ENCODE measurements at regions of chr16 and their contacts with region 1.

Region 1: GRCh38 chr16:28317040-28317880 is 24.9 kb downstream of the SBK1 start:
- DNase-seq: peak; percentile 33
- H3K4me3 ChIP-seq: no peak overlapping the region
- H3K27ac ChIP-seq: no peak overlapping the region
- H3K4me1 ChIP-seq: no peaks in the 10 kb centered on the region
- H3K27me3 ChIP-seq: no peaks in the 10 kb centered on the region
- CTCF ChIP-seq: peak; percentile 71 to 87 (median 80)
- POLR2A ChIP-seq: no peak

Region 2: DNA sequence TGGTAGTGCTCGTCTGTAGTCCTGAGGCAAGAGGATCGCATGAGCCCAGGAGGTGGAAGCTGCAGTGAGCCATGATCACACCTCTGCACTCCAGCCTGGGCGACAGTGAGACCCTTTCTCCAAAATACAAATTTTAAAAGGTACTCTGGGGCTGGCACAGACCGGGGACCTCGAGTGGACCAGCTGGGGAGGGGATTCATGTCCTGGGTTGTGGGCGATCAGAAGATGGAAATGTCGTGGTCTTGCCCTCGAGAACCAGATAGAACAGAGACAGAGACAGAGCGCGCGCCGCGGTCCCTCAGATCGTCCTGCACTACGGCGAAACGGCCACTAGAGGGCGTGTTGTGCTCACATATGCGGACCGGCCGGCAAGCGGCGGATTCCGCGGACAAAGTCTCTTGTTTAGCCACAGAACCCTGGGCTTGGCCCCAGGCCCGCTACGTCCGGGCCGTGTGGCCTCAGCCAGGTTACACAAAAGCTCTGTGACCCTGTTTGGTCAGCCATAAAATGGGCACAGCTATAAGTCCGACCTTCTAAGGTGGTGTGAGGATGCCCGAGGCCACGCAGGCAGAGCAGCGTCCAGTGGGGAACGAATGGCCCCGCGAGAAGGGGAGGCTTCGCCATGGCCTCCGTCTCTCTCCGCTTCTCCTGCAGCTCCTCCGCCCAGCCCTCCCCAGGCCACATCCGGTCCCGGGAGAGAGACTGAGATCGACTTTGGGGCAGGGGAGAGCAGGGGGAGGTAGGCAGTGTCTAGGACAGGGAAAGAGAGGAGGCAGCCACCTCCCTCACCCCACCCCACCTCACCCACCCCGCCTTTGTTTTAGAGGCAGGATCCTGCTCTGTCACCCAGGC is 39.5 kb before region 1 on chr16:
- intact Hi-C with region 1: loop called (anchors 5 kb)
- DNase-seq: peak; percentile 82
- H3K4me3 ChIP-seq: peak overlapping the region; percentile 29 to 32
- H3K27ac ChIP-seq: no peak overlapping the region
- H3K4me1 ChIP-seq: no peaks in the 10 kb centered on the region
- H3K27me3 ChIP-seq: peaks cover 2% of the 10 kb centered on the region
- CTCF ChIP-seq: peak; percentile 95 to 99 (median 96)
- POLR2A ChIP-seq: no peak